Ovary (tissue), 10 donors: ENCODE measurements at regions of chr16 and their contacts with region 1.

Region 1: DNA sequence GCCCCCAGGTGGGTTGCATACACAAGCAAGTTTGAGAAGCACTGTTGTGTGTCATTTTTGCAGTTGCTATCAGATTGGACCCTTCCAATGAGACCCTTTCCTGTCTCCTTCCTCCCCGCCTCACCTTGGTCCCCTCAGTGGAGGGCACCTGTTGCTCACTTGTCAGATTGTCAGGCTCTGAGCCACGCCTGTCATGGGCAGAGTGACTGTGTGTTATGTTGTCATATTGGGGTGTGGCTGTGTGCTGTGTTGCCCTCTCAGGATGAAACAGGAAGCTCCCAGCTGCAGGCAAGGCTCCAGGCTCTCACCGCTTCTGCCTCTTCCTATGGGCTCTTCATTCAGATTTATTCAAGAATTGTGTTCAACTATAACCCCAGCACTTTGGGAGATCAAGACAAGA is 302.9 kb downstream of the CPPED1 start:
- DNase-seq: no peak
- H3K4me3 ChIP-seq: no peak overlapping the region
- H3K27ac ChIP-seq: no peak overlapping the region
- H3K4me1 ChIP-seq: no peaks in the 10 kb centered on the region
- H3K27me3 ChIP-seq: no peaks in the 10 kb centered on the region
- CTCF ChIP-seq: no peak
- EP300 ChIP-seq: no peak
- POLR2A ChIP-seq: no peak

Region 2: DNA sequence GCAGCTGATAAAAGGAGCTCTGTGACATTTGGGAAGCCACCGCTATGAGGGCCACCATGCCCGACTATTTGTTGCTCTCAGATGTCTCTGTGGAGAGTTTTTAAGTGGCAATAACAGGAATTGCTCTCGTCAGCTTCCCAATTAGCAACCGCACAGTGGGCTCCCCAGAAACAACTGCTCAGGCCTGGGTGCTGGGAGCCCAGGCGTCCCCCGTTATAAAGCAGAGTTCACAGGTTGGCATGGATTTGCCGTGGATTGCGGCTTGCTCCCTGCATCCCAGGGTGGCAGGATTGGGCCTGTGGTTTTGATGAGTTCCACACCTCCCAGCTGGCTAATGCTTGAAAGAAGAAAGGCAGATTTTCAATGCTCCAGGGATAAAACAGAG is 13.0 kb after region 1 on chr16:
- intact Hi-C with region 1: loop called in 1 of 4 experiments (anchors 1 kb)
- DNase-seq: no peak
- H3K4me3 ChIP-seq: no peak overlapping the region
- H3K27ac ChIP-seq: no peak overlapping the region
- H3K4me1 ChIP-seq: peaks cover 17% of the 10 kb centered on the region
- H3K27me3 ChIP-seq: no peaks in the 10 kb centered on the region
- CTCF ChIP-seq: no peak
- EP300 ChIP-seq: no peak
- POLR2A ChIP-seq: no peak

Region 3: DNA sequence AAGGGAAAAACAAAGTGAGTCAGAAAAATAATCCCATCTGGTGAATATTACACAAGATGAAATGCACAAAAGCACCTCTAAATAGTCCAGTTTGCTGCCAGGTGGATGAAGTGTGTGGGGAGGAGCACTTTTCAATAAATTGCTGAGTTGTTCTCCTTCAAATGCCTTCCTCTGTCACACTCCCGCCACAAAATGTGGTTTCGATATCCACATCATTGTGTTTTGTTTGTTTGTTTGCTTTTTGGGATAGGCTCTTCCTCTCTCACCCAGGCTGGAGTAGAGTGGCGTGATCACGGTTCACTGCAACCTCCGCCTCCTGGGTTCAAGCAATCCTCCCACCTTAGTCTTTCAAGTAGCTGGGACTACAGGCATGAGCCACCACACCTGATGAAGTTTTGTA is 376.0 kb after region 1 on chr16:
- intact Hi-C with region 1: no loop called
- DNase-seq: no peak
- H3K4me3 ChIP-seq: no peak overlapping the region
- H3K27ac ChIP-seq: no peak overlapping the region
- H3K4me1 ChIP-seq: no peaks in the 10 kb centered on the region
- H3K27me3 ChIP-seq: no peaks in the 10 kb centered on the region
- CTCF ChIP-seq: no peak
- EP300 ChIP-seq: no peak
- POLR2A ChIP-seq: no peak